ENCODE measurements at regions of chr9 and their contacts with region 1.

Region 1: DNA sequence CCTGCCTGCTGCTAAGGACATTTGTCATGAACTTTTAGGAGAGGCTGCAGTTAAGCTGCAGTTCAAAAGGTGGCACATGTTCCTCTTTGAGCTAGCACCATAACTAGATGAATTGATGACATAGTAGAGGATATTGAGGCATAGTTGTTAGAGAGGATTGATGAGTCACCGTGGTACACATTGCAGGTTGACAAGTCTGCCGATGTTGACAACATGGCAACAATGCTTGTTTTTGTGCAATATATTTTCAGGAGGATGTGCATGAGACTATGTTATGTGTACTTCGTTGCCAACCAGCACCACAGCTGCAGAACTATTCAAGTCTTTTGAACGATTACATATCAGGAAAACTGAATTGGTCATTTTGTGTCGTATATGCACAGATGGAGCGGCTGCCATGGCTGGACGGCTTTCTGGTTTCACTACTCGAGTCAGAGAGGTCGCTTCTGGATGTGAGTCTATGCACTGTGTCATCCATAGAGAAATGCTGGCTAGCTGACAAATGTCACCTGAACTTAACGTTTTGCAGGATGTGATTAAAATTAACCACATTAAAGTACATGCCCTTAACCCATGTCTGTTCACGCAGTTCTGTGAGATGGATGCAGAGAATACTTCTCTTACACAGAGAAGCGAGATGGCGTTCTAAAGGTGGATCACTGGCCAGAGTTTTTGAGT is 24.2 kb downstream of the ANP32B start:
- DNase-seq: no peak
- ATAC-seq: no peak
- H3K4me3 ChIP-seq: no peak overlapping the region
- H3K27ac ChIP-seq: no peak overlapping the region
- H3K4me1 ChIP-seq: no peaks in the 10 kb centered on the region
- H3K27me3 ChIP-seq: no peaks in the 10 kb centered on the region
- CTCF ChIP-seq: no peak
- EP300 ChIP-seq: no peak
- POLR2A ChIP-seq: no peak
- RAD21 ChIP-seq: no peak

Region 2: DNA sequence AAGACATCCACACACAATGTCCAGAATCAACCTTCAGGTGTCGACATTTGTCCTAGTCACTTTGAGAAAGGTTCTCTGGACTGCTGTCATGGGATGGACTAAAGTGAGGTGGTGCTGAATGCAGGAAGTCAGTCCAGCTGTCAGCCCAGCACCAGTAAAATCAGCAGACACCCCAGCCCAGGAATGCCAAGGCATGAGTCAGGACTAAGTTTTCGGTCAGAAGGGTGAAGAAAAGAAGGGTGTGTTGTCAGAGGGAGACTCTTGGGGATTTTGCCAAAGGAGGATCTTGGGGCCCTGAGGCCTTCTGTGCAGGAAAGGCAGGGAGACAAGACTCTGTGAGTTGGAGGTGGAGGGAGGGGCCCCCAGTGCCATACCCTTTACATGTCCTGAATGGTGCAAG is 241.3 kb before region 1 on chr9:
- CTCF ChIA-PET with region 1: no interaction called
- POLR2A ChIA-PET with region 1: no interaction called
- RAD21 ChIA-PET with region 1: no interaction called
- SMC1A ChIA-PET with region 1: no interaction called
- in situ Hi-C with region 1: no loop called
- intact Hi-C with region 1: no loop called
- DNase-seq: no peak
- ATAC-seq: no peak
- H3K4me3 ChIP-seq: no peak overlapping the region
- H3K27ac ChIP-seq: no peak overlapping the region
- H3K4me1 ChIP-seq: no peaks in the 10 kb centered on the region
- H3K27me3 ChIP-seq: peaks cover 0 to 3% of the 10 kb centered on the region in 2 experiments; a peak in 1 of 4 replicates
- CTCF ChIP-seq: no peak
- EP300 ChIP-seq: no peak
- POLR2A ChIP-seq: no peak
- RAD21 ChIP-seq: no peak

Region 3: DNA sequence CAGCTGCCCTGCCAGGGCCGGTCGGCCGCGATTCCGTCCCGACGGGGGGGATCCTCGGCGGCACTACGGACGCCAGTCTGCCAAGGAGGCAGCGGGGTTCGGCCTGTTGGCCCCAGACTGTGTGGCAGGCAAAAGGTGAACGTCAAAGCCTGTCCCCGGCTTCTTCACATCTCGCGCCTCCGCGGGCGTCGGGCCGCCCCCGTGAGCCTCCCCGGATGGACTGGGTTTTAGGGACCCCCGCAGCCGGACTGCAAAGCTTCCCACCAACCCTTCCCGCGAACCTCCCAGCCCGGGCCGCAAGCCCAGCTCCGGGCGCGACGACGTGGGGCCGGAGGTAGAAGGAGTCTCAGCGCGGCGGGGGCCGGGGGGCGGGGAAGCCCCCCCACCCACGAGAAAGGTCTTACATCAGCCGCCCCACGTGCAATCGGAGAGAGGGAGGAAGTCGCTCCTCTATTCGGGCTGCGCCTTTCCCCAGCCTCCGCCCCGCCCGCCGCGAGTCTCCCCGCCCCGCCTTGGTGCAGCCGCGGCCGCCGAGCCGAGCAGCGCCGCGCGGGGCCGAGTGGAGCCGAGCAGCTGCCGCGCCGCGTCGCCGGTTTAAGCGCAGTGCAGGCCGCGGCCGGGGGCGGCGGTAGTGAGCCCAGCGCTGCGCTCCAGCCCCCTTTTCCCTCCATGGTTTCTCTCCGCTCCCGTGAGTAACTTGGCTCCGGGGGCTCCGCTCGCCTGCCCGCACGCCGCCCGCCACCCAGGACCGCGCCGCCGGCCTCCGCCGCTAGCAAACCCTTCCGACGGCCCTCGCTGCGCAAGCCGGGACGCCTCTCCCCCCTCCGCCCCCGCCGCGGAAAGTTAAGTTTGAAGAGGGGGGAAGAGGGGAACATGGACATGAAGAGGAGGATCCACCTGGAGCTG is 24.5 kb before region 1 on chr9 and contains the start of gene ANP32B:
- CTCF ChIA-PET with region 1: interaction called, 4 read pairs
- POLR2A ChIA-PET with region 1: interaction called, 11 read pairs
- RAD21 ChIA-PET with region 1: interaction called, 5 read pairs
- SMC1A ChIA-PET with region 1: interaction called, 6 read pairs
- in situ Hi-C with region 1: no loop called
- intact Hi-C with region 1: no loop called
- DNase-seq: peak; percentile 44
- ATAC-seq: peak; percentile 88
- H3K4me3 ChIP-seq: peak within 1 kb of the TSS; percentile 90
- H3K27ac ChIP-seq: peak within 1 kb of the TSS; percentile 99
- H3K4me1 ChIP-seq: peaks cover 18% of the 10 kb centered on the region
- H3K27me3 ChIP-seq: no peaks in the 10 kb centered on the region
- CTCF ChIP-seq: peak; percentile 76 to 84 (median 83); a peak in 5 of 6 replicates
- EP300 ChIP-seq: no peak
- POLR2A ChIP-seq: peak; percentile 78
- RAD21 ChIP-seq: peak; percentile 39; the same call in 1 of the 2 replicates
- polyA plus RNA-seq, gene ANP32B: 85.9 to 204 TPM

Region 4: DNA sequence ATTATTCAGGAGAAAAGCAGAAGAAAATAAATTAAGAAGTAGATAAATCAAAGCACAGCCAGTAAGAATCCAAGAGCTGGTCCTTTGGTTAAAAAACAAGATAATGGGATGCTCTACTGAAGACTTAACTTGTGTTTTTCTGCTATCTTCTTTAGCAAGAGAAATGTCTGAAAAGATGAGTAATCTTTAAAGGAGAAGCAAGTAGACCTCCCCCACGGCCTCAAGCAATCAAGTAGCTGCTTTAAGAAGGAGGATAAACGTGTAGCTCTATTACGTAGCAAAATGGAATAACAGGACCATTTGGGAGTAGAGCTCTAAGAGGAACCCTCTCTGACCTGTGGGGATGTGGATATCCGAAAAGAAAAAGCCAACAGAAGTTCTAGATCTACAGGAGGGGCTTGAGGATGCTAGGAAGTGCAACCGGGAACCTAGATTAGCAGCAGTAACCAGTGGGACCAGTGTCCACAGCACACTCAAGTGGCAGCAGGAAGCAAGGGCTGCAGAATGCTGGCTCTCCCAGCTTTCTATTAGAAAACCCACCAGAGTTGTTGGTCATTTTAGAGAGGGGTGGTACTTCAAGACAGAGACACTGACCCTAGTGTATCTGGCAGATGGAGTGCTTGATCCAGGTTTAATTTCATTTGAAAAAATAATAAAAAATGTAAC is 516.0 kb after region 1 on chr9:
- CTCF ChIA-PET with region 1: no interaction called
- POLR2A ChIA-PET with region 1: no interaction called
- RAD21 ChIA-PET with region 1: no interaction called
- SMC1A ChIA-PET with region 1: no interaction called
- in situ Hi-C with region 1: no loop called
- intact Hi-C with region 1: no loop called
- DNase-seq: no peak
- ATAC-seq: no peak
- H3K4me3 ChIP-seq: no peak overlapping the region
- H3K27ac ChIP-seq: no peak overlapping the region
- H3K4me1 ChIP-seq: no peaks in the 10 kb centered on the region
- H3K27me3 ChIP-seq: no peaks in the 10 kb centered on the region; a peak in 2 of 4 replicates
- CTCF ChIP-seq: peak in 2 of 3 experiments; percentile 9 to 23; a peak in 2 of 6 replicates
- EP300 ChIP-seq: no peak
- POLR2A ChIP-seq: no peak
- RAD21 ChIP-seq: no peak